A549 (cell line): ENCODE measurements at regions of chr3 and their contacts with region 1.

Region 1: DNA sequence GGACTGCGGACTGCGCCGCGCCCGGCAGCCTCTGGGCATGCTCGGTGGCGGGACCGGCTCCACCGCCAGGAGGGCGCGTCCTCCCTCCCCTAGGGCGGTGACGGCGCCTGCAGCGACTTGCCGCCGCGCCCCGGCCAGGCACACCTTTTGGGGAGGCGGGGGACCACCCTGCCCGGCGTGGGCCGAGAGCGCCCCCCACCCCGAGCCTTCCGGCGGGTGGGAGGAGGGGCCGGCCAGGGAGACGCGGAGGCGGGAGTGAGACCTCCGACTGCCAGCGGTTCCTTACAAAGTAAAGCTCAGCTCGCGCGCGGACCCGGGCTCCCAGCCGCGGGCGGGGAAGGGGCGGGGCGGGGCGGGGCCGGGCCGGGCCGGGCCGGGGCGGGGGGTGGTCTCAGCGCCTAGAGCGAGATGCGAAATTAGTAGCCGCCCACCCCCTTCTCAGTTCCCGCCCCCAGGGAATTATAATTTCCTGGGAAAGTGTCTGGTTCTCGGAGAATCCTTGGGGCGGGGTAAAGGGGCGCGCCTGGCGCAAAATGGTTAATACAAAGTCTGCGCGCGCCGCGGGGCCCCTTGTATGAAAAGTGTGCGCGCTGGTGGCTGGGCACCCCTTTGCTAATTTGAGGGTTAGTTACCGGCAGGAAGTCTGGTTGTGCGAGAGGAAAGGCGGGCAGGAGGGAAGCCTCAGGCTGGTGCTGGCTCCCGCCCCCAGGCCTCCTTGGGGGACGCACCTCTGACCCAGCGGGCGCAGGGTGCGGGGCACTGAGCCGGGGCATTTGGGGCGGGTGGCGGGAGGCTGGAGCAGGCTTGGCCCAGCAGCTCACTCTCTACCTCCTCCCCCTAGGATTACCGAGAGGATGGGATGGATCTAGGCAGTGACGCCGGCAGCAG is 224.8 kb upstream of the IL12A start:
- DNase-seq: peak; percentile 81 to 88
- ATAC-seq: peak; percentile 57 to 71
- H3K4me3 ChIP-seq: peak overlapping the region; percentile 94
- H3K27ac ChIP-seq: peak overlapping the region; percentile 95 to 96
- H3K4me1 ChIP-seq: peaks cover 41% of the 10 kb centered on the region
- CTCF ChIP-seq: peak; percentile 22; the same call in 2 of the 3 replicates
- EP300 ChIP-seq: no peak
- POLR2A ChIP-seq: peak; percentile 81
- RAD21 ChIP-seq: peak; percentile 9 to 54; a peak in 2 of 5 replicates

Region 2: DNA sequence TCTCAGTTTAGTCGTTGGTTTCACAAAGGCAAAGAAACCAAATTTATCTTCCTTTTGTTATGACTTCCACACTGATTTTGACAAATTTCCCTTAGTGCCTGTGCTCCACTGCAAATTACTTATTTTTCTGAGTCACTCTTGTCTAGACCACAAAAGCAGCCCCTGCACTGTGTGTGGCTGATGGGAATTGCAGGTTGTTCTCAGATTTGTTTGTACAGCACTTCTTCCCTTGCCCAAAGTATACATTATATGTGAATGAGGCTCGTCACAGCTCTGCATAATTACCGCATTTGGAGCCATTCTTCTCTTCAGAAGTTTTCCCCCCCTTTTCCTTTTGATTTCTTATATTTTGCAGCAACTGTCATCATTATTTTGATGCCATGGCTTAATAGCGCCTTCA is 129.4 kb before region 1 on chr3:
- CTCF ChIA-PET with region 1: interaction called, 3 read pairs
- POLR2A ChIA-PET with region 1: interaction called, 24 read pairs
- DNase-seq: peak in 1 of 2 experiments; percentile 83
- ATAC-seq: peak; percentile 87 to 90
- H3K4me3 ChIP-seq: 0 out of 3 replicates have a peak overlapping the region, but pooled peaks have one; percentile 10
- H3K27ac ChIP-seq: peak overlapping the region; percentile 76 to 85
- H3K4me1 ChIP-seq: peaks cover 68% of the 10 kb centered on the region
- CTCF ChIP-seq: no peak
- EP300 ChIP-seq: peak; percentile 42 to 57; a peak in 2 of 5 replicates
- POLR2A ChIP-seq: no peak
- RAD21 ChIP-seq: peak in 1 of 2 experiments; percentile 18; a peak in 1 of 5 replicates

Region 3: DNA sequence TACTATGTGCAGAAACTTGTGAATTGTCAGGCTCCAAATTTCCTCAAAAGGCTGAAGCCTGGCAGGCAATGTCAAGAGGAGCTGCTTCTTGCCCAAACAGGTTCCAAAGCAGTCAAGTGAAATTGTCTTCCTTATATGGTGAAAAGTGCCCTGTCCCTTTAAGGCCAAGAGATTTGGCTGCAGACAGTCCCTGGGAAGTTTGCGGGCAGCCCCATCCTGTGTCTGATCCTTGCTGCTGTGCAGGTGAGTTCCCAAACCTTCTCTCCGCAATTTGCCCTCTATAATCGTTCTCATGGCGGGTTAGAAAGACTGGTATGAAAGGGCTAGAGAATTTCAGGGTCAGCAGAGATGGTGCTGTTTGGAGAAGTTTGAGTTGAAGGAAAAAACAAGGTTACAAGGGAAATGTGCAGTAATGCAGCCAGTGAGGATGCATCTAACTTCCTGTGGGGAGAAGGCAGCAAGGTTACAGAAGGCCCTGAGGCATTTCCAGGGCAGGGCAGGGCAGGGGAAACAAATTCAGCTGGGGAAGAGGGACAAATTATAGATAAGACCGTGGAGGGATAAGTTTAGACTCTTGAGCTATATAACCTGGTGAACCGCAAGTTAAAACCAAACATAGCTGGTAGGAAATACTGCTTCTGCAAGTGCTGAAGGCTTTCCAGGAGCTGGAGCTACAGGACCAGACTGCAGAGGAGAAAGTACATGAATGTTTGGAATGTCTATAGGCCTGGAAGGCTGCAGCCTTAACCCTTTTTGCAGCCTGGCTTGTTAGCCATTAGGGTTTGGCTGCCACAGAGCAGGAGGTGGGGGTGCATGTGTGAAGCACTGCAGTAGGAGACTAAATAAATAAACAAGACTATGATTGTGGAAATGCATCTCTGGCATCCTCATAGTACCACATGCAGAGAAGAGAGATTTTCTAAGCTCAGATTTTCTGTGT is 31.4 kb before region 1 on chr3:
- CTCF ChIA-PET with region 1: interaction called, 3 read pairs
- POLR2A ChIA-PET with region 1: interaction called, 18 read pairs
- DNase-seq: peak; percentile 50 to 64
- ATAC-seq: peak; percentile 90 to 93
- H3K4me3 ChIP-seq: peak overlapping the region; percentile 39
- H3K27ac ChIP-seq: peak overlapping the region; percentile 69 to 81
- H3K4me1 ChIP-seq: peaks cover 33% of the 10 kb centered on the region
- CTCF ChIP-seq: no peak
- EP300 ChIP-seq: 0 out of 5 replicates have a peak, but pooled peaks of 1 of the 2 experiments have one; percentile 41
- POLR2A ChIP-seq: no peak
- RAD21 ChIP-seq: peak; percentile 28 to 31; a peak in 3 of 5 replicates

Region 4: GRCh38 chr3:159775372-159775961 is 11.6 kb after region 1 on chr3:
- CTCF ChIA-PET with region 1: interaction called, 43 read pairs
- POLR2A ChIA-PET with region 1: no interaction called
- DNase-seq: no peak
- ATAC-seq: peak; percentile 73 to 74; a peak in 5 of 6 replicates
- H3K4me3 ChIP-seq: no peak overlapping the region
- H3K27ac ChIP-seq: peak overlapping the region in 1 of 2 experiments; percentile 39; a peak in 2 of 6 replicates
- H3K4me1 ChIP-seq: peaks cover 31% of the 10 kb centered on the region
- CTCF ChIP-seq: no peak
- EP300 ChIP-seq: no peak
- POLR2A ChIP-seq: no peak
- RAD21 ChIP-seq: no peak

Region 5: GRCh38 chr3:159787191-159787590 is 23.3 kb after region 1 on chr3:
- CTCF ChIA-PET with region 1: interaction called, 43 read pairs
- POLR2A ChIA-PET with region 1: interaction called, 7 read pairs
- DNase-seq: peak; percentile 65 to 90
- ATAC-seq: peak; percentile 73 to 80
- H3K4me3 ChIP-seq: peak overlapping the region; percentile 13; the same call in 2 of the 3 replicates
- H3K27ac ChIP-seq: peak overlapping the region; percentile 75 to 84
- H3K4me1 ChIP-seq: peaks cover 99% of the 10 kb centered on the region
- CTCF ChIP-seq: no peak
- EP300 ChIP-seq: 0 out of 5 replicates have a peak, but pooled peaks of 1 of the 2 experiments have one; percentile 31
- POLR2A ChIP-seq: no peak
- RAD21 ChIP-seq: no peak

Region 6: GRCh38 chr3:159796744-159797143 is 32.9 kb after region 1 on chr3:
- CTCF ChIA-PET with region 1: interaction called, 26 read pairs
- POLR2A ChIA-PET with region 1: interaction called, 3 read pairs
- DNase-seq: peak; percentile 23 to 53
- ATAC-seq: peak; percentile 37 to 57; a peak in 4 of 6 replicates
- H3K4me3 ChIP-seq: no peak overlapping the region
- H3K27ac ChIP-seq: no peak overlapping the region
- H3K4me1 ChIP-seq: peaks cover 51% of the 10 kb centered on the region
- CTCF ChIP-seq: no peak
- EP300 ChIP-seq: no peak
- POLR2A ChIP-seq: no peak
- RAD21 ChIP-seq: no peak

Region 7: DNA sequence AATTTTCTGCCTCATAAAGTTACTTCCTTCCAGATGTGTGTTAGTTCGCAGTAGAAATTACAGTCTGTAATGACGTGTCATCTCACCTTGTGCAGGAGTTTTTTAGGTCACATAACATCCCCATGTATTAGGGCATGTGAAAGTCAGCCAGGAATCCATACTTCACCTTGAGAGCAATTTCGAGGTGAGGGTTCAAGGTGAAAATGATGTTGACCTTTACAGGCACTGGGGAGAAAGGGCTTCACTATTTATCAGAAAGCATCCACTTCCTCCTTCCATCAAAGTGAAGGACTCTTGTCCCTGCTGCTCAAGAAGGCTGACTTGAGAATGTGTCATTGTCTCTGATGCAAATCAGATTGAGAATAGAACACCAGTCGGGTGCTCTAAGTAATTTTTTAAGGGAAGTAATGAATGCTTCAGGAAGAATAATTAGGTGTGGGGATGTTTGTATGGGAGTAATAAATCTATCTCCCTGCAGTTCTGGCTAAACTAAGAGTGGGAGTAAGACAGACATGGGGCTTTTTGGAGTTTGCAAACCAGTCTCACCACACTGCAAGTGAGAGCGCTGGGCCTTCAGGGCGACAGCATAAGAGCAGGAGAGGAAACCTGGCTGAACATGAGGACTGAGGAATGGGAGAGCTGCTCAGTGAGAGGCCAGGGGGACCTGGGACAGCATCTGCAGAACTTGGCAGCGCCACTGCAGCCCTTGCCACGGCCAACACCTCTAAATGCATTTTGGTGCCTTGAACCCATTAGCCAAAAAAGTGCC is 138.9 kb after region 1 on chr3:
- CTCF ChIA-PET with region 1: no interaction called
- POLR2A ChIA-PET with region 1: no interaction called
- DNase-seq: no peak
- ATAC-seq: peak in 1 of 2 experiments; percentile 32; a peak in 2 of 6 replicates
- H3K4me3 ChIP-seq: no peak overlapping the region
- H3K27ac ChIP-seq: no peak overlapping the region
- H3K4me1 ChIP-seq: no peaks in the 10 kb centered on the region
- CTCF ChIP-seq: no peak
- EP300 ChIP-seq: no peak
- POLR2A ChIP-seq: no peak
- RAD21 ChIP-seq: no peak

Region 8: DNA sequence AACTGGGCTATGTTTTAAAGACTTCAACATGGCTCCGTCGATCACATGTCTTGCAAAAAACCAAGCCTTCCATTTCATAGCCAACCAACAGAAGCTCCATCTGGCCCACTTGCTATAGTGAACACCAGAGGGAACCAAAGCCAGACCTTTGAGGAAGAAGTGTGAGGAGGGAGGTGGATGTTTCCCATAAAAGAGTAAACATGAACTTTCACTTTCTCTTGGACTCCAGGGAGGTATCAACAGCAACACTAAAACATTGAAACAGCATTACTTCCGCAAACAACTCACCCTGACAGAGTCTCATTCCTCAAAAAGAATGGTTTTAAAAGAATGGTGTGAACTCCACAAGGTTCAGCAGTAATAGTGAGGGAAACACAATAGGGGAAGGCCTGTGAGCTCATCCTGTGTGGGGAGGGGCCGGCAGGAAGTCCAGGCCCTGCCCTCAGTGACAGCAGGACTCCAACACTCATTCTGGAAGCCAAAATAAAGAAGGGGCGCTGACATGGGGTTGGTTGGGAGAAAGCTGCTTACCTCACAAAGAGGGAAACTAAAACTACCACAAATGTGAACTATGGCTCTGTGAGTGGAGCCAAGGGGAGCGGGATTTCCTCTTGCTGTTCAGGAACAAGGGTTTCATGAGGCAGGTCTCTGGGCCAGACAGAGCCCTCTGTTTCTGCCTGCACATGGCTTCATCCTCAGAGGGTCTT is 165.7 kb after region 1 on chr3:
- CTCF ChIA-PET with region 1: no interaction called
- POLR2A ChIA-PET with region 1: no interaction called
- DNase-seq: peak; percentile 44 to 66
- ATAC-seq: peak; percentile 58 to 70
- H3K4me3 ChIP-seq: no peak overlapping the region
- H3K27ac ChIP-seq: peak overlapping the region; percentile 70 to 82
- H3K4me1 ChIP-seq: peaks cover 25% of the 10 kb centered on the region
- CTCF ChIP-seq: peak; percentile 17; the same call in 1 of the 3 replicates
- EP300 ChIP-seq: no peak
- POLR2A ChIP-seq: no peak
- RAD21 ChIP-seq: peak; percentile 31 to 45; a peak in 4 of 5 replicates

Region 9: GRCh38 chr3:159989973-159990846 is 226.4 kb after region 1 on chr3:
- CTCF ChIA-PET with region 1: no interaction called
- POLR2A ChIA-PET with region 1: no interaction called
- DNase-seq: no peak
- ATAC-seq: no peak
- H3K4me3 ChIP-seq: no peak overlapping the region
- H3K27ac ChIP-seq: no peak overlapping the region
- H3K4me1 ChIP-seq: 0 out of 3 replicates have a peak, but pooled peaks cover 8% of the 10 kb centered on the region
- CTCF ChIP-seq: no peak
- EP300 ChIP-seq: no peak
- POLR2A ChIP-seq: no peak
- RAD21 ChIP-seq: no peak